ENCODE measurements at regions of chr10 and their contacts with region 1.

Region 1: DNA sequence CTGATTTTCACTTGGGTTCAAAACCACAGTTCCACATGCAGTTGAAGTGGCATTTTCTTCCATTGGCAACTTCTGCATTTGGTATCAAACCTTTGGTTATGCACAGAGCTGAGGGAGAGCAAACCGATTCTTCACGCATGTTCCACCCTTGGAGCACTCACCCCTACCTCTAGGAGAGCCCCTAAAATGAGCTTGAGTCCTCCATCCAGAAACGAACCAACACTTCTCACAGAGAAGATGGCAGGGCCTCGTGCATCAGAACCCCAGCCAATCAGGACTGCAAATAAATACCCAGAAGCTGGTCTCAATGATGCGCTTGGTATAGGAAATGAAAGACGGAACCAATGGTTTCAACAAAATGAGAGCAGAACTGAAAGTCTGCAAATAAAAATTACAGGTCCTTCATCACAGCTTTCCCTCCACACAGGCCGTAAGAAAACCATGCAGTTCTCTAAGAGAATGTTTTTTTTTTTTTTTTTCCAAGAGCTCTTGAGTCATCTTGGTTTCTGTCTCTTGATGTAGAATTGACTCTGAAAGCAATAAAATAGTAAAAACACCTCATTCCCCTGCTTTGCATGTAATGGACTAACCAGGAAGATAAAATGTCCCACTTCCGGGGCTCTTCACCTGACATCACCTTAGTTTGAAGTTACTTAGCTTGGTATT is 23.9 kb downstream of the KLF6 start:
- DNase-seq: peak in 1 of 2 experiments; percentile 53
- H3K4me3 ChIP-seq: 0 out of 2 replicates have a peak overlapping the region, but pooled peaks have one; percentile 12
- H3K27ac ChIP-seq: peak overlapping the region; percentile 100
- H3K4me1 ChIP-seq: peaks cover 89% of the 10 kb centered on the region
- H3K27me3 ChIP-seq: no peaks in the 10 kb centered on the region
- CTCF ChIP-seq: no peak

Region 2: DNA sequence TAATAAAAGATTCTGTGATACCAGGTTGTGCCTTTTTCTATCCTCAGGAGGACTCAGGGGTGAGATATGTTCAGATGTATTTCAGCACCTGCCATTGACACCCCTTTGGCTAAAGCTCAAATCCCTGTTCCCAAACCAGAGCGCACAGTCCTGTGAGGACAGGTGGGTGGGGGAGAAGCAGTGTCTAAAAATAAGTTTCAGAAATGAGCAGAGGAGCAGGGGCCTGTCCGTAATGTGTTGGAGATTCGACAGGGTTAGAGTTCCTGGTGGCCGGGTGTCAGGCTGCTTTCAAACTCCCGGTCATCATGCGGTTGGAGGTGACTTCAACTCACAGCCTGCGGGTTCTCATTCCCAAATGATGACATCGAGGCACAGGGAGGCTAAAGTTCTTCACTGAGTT is 187.7 kb before region 1 on chr10:
- CTCF ChIA-PET with region 1: no interaction called
- POLR2A ChIA-PET with region 1: no interaction called
- intact Hi-C with region 1: no loop called
- DNase-seq: no peak
- H3K4me3 ChIP-seq: no peak overlapping the region
- H3K27ac ChIP-seq: no peak overlapping the region
- H3K4me1 ChIP-seq: no peaks in the 10 kb centered on the region
- H3K27me3 ChIP-seq: no peaks in the 10 kb centered on the region
- CTCF ChIP-seq: no peak

Region 3: GRCh38 chr10:3623746-3624145 is 137.4 kb before region 1 on chr10:
- CTCF ChIA-PET with region 1: no interaction called
- POLR2A ChIA-PET with region 1: interaction called, 9 read pairs
- intact Hi-C with region 1: loop called (anchors 1 kb)
- DNase-seq: peak; percentile 55 to 92
- H3K4me3 ChIP-seq: peak overlapping the region; percentile 49; the same call in 1 of the 2 replicates
- H3K27ac ChIP-seq: peak overlapping the region; percentile 100
- H3K4me1 ChIP-seq: peaks cover 48% of the 10 kb centered on the region
- H3K27me3 ChIP-seq: no peaks in the 10 kb centered on the region
- CTCF ChIP-seq: no peak

Region 4: DNA sequence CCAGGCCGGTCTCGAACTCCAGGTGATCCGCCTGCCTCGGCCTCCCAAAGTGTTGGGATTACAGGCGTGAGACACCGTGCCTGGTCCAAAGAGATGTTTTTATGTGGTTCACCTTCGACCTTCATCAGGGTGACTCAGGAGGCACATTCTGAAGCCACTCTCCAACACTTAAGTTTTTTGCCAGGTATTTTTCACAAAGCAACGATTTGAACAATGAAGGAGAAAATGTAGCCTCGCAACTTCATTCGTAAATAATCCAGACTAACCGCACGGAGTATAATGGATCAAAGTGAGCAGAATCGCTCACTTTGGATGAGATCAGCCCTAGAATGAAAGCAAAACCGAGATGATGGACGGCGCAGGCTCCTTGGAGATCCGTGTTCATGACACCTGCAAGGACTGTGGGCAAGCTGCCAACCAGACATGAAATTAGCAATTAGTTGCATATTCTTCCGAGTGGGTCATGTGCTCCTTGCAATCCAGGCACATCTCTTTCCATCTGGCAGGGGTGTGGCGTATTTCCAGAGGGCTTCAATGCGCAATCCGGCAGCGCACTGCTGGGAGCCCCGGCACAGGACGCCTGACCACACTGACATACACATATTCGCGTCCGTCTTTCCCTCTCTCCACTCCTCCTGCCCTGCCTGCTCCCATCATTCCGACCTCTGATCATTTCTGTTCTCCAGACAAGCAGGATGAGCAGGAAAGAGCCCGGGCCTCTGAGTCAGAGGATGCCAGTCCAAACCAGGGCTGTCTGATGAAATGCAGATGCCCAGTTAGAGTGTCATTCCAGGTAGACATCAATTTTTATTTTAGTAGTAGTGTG is 124.6 kb before region 1 on chr10:
- CTCF ChIA-PET with region 1: no interaction called
- POLR2A ChIA-PET with region 1: interaction called, 11 read pairs
- intact Hi-C with region 1: loop called (anchors 1 kb)
- DNase-seq: peak; percentile 79 to 86
- H3K4me3 ChIP-seq: peak overlapping the region; percentile 50; the same call in 1 of the 2 replicates
- H3K27ac ChIP-seq: peak overlapping the region; percentile 94
- H3K4me1 ChIP-seq: peaks cover 58% of the 10 kb centered on the region
- H3K27me3 ChIP-seq: no peaks in the 10 kb centered on the region
- CTCF ChIP-seq: no peak

Region 5: GRCh38 chr10:3668276-3668965 is 92.7 kb before region 1 on chr10:
- CTCF ChIA-PET with region 1: no interaction called
- POLR2A ChIA-PET with region 1: interaction called, 4 read pairs
- intact Hi-C with region 1: loop called (anchors 5 kb)
- DNase-seq: peak; percentile 87 to 94
- H3K4me3 ChIP-seq: peak overlapping the region; percentile 50; the same call in 1 of the 2 replicates
- H3K27ac ChIP-seq: peak overlapping the region; percentile 99
- H3K4me1 ChIP-seq: peaks cover 23% of the 10 kb centered on the region
- H3K27me3 ChIP-seq: no peaks in the 10 kb centered on the region
- CTCF ChIP-seq: no peak

Region 6: GRCh38 chr10:3689871-3690510 is 71.2 kb before region 1 on chr10:
- CTCF ChIA-PET with region 1: no interaction called
- POLR2A ChIA-PET with region 1: no interaction called
- intact Hi-C with region 1: loop called (anchors 1 kb)
- DNase-seq: peak; percentile 36 to 91
- H3K4me3 ChIP-seq: no peak overlapping the region
- H3K27ac ChIP-seq: peak overlapping the region; percentile 84
- H3K4me1 ChIP-seq: peaks cover 22% of the 10 kb centered on the region
- H3K27me3 ChIP-seq: no peaks in the 10 kb centered on the region
- CTCF ChIP-seq: no peak

Region 7: DNA sequence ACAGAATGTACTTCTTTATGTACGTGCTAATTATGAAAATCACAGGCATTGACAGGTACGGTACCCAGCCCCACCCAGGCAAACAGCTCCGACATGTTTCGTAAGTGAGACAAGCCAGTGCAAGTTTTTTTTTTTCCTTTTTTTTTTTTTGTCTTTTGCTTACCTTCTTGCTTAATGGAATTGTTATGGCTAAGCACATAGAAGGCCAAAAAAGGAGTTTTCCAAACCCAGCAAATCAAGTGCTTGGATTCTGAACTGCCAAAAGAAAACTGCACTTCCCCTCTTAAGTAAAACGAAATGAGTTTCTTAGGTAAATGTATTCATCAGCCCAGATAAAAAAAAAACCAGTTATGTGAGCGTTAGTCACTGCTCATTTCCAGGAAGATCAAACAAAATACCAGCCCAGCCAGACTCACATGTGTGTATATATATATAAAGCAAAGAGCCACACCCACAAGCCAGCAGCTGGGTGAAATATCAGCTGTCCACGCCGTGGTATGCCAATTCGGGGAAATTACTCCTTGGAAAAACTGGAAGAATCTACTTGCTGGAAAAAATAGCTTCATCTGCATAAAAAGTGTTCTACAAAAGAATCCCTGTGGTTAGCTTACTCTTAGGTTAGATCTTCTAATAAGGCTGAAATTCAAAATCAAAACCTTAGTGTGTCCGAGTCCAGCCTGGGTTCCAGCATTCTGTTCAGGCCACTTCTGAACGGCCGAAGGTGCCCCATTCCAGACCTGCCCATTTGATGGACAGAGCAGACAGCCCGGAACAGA is 15.8 kb after region 1 on chr10:
- CTCF ChIA-PET with region 1: interaction called, 5 read pairs
- POLR2A ChIA-PET with region 1: interaction called, 3 read pairs
- intact Hi-C with region 1: loop called (anchors 1 kb)
- DNase-seq: peak; percentile 74 to 96
- H3K4me3 ChIP-seq: no peak overlapping the region; the same call in 1 of the 2 replicates
- H3K27ac ChIP-seq: peak overlapping the region; percentile 87
- H3K4me1 ChIP-seq: peaks cover 67% of the 10 kb centered on the region
- H3K27me3 ChIP-seq: no peaks in the 10 kb centered on the region
- CTCF ChIP-seq: no peak

Region 8: DNA sequence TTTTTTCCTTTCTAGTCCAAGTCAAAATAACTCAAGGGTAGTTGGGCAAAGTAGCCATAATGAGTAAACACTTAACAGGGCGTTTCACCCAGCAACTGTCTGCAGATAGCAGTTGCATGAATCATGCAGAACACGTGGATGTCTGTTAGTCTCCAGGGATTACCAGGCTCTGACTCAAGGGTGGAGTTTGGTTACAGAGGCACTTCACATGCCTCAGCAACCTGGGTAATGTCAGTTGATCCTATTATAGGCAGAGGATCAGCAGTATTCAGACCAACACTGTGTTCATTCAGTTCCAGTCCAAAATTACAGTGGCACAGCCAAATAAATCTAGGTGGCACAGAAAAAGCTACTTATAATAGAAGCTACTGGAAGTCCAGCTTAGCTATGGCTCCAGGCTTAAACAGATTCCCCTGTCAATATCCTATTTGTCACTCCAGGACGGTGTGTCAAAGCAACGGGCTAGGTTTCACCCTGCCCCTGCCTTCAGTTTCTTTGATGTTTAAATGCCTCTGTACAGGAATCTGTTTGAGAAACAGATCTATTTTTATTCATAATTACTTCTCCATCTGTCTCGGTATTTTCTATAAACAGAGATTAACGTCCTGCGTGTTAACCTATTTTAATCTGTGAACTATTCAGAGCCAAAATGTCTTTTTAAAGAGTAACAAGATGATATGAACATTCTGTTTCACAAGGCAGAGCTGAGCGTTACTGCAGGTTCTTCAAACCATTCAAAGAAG is 902.2 kb after region 1 on chr10:
- CTCF ChIA-PET with region 1: no interaction called
- POLR2A ChIA-PET with region 1: no interaction called
- intact Hi-C with region 1: loop called (anchors 5 kb)
- DNase-seq: peak; percentile 75 to 94
- H3K4me3 ChIP-seq: peak overlapping the region; percentile 17; the same call in 1 of the 2 replicates
- H3K27ac ChIP-seq: peak overlapping the region; percentile 96
- H3K4me1 ChIP-seq: peaks cover 24% of the 10 kb centered on the region
- H3K27me3 ChIP-seq: no peaks in the 10 kb centered on the region
- CTCF ChIP-seq: no peak